A549 (cell line): ENCODE measurements at regions of chr22 and their contacts with region 1.

Region 1: DNA sequence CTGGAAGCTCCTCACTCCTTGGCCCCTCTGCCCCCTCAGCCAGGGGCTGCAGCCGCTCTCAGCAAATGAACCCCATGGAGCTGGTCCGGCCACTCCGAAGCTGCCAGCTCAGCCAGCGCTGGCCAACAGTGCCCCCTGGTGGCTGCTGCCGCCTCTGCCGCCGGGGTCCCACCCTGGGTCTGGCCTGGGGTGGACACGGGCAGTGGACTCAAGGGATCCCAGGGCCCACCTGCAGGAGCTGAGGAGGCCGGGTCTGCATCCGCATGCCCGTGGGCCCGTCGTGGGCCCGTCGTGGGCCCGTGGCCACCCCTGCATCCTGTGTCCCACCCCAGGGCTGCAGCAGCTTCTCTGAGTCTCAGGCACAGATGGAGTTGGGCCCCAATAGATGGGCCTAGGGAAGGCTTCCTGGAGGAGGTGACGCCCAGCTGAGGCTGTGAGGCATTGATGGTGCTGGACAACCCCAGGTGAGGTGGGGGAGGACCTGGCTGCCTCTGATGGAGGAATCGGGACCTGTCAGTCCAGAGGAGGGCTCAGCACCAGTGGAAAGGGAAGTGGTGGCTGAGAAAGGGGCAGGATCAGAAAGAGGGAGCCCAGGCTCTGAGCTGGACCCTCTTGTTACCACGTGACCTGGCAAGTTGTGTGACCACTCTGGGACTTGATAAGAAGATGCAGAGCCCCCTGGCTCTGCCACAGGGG is 522.3 kb downstream of the BRD1 start:
- DNase-seq: peak; percentile 31 to 49
- ATAC-seq: peak; percentile 93 to 98
- H3K4me3 ChIP-seq: no peak overlapping the region
- H3K27ac ChIP-seq: peak overlapping the region; percentile 38 to 60; a peak in 1 of 6 replicates
- H3K4me1 ChIP-seq: no peaks in the 10 kb centered on the region
- CTCF ChIP-seq: peak; percentile 70
- EP300 ChIP-seq: no peak
- POLR2A ChIP-seq: no peak
- RAD21 ChIP-seq: peak; percentile 89 to 90

Region 2: DNA sequence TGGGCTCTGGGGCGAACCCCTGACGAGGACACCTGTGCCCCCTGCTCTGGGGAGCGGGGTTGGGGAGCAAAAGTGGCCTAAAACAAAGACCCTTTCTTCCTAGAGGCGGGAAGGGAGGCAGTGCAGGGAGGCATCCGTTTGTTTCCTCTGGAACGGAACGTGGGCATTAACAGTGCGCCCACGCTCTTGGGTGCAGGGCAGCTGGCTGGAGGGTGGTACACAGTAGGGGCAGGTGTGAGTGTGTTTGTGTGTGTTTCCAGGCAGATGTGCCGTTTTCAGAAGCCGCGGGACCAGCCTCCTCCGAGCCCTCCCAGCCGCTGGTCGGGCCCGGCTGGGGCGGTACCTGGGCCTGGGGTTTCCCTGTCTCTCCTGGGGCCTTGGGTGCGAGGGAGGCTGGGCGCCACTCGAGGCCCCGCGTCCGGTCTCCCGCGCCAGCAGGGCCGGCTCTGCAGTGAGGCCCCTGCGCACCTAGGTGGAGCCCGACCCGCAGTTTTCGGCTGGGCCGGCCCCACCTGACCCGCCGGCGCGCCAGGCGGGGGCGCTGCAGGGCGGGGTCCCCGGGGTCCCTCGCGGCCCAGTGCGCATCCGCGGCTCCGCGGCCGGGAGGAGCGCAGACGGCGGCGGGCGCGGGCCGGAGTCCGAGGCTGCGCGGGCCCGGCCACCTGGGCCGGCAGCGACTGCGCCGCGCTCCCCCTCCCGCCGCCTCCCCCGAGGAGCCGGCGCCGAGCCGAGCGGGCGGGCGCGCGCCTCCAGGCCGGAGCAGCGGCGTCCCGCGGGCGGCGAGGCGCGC is 730.4 kb before region 1 on chr22:
- CTCF ChIA-PET with region 1: interaction called, 20 read pairs
- POLR2A ChIA-PET with region 1: no interaction called
- DNase-seq: peak; percentile 67 to 79
- ATAC-seq: peak; percentile 83 to 94
- H3K4me3 ChIP-seq: peak overlapping the region; percentile 52
- H3K27ac ChIP-seq: peak overlapping the region; percentile 64 to 91; a peak in 5 of 6 replicates
- H3K4me1 ChIP-seq: 0 out of 3 replicates have a peak, but pooled peaks cover 4% of the 10 kb centered on the region
- CTCF ChIP-seq: peak; percentile 81
- EP300 ChIP-seq: no peak
- POLR2A ChIP-seq: peak; percentile 32; the same call in 1 of the 2 replicates
- RAD21 ChIP-seq: peak; percentile 46 to 67

Region 3: GRCh38 chr22:48943567-48944432 is 361.6 kb before region 1 on chr22:
- CTCF ChIA-PET with region 1: interaction called, 13 read pairs
- POLR2A ChIA-PET with region 1: no interaction called
- DNase-seq: peak; percentile 20 to 25
- ATAC-seq: peak; percentile 84 to 97
- H3K4me3 ChIP-seq: no peak overlapping the region
- H3K27ac ChIP-seq: no peak overlapping the region
- H3K4me1 ChIP-seq: no peaks in the 10 kb centered on the region
- CTCF ChIP-seq: peak; percentile 34; the same call in 2 of the 3 replicates
- EP300 ChIP-seq: no peak
- POLR2A ChIP-seq: no peak
- RAD21 ChIP-seq: peak; percentile 25 to 26; a peak in 2 of 5 replicates

Region 4: DNA sequence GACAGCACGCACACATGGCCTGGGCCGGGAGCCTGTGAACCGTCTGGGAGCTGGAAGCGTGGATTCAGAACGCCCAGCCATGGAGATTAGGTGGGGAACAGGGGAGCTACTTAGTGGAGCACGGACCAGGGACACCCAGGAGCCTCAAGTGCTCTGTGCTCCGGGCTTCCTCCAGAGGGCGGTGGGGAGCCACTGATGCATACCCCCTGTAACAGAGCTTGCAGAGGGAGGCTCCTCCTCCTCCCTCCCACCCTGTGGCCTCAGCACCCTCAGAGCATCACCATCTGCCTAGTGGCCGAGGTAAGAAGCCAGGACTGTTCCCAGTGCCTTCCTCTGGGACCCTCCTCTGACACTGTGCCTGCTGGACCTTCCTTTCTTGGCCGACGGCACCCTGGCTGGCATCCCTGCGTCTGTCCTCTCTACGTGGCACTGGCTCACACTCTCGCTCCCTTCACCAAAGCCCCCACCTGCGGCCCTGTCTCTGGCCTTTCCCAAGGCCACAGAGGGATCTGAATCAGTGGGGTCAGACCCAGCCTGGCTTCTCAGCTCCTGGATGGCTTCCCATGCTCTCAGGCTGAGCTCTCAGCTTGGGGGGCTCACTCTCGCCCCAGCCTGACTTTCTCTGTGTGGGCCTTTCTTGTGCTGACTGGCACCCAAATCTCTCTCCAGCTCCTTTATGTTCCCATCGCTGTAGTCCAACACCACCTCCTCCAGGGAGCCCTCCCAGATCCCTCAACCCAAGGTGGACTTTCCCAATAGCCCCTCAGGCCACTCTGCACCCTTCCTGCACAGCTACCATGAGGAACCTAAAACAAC is 258.6 kb before region 1 on chr22:
- CTCF ChIA-PET with region 1: interaction called, 98 read pairs
- POLR2A ChIA-PET with region 1: no interaction called
- DNase-seq: peak; percentile 50 to 60
- ATAC-seq: peak; percentile 86 to 99
- H3K4me3 ChIP-seq: no peak overlapping the region
- H3K27ac ChIP-seq: no peak overlapping the region
- H3K4me1 ChIP-seq: no peaks in the 10 kb centered on the region
- CTCF ChIP-seq: peak; percentile 42
- EP300 ChIP-seq: no peak
- POLR2A ChIP-seq: no peak
- RAD21 ChIP-seq: peak; percentile 62 to 76

Region 5: DNA sequence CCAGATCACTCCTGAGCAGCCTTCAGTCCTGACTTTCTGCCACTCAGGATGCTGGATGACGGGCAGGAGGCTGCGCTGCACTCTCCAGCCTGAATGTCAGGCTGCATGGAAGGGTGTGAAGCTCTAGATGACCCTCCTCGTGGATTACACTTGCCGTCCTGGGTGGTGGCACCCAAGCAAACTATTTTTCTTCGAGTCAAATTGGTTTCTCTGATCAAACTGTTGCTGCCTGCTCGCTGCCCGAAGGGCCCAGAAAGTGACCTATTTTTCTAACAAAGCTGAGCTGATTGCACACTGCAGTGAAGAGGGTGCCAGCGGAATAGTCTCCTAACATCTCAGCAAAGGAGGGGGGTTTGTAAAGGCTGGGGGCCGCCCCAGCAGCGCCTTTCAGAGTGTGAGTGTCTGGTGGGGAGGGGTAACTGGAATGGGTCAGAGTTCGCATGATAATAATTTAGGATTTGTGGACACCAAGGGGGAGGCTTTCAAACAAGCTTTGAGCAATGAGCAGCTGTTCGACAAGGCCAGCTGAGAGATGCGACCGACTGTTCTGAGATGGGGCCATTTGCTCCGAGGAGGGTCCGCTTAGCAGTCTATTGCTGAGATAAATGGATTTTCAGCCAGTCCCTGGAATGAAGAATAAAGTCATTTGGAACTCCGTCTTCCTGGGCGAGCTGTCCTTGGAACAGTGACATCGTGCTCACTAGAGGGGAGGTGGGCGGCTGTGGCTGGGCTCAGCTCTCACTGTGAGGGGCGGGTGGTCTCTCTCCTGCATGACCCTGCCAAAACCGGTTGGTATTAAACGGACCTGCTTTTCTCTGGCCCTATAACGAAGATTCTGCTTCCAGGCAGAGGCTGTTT is 15.3 kb before region 1 on chr22:
- CTCF ChIA-PET with region 1: interaction called, 22 read pairs
- POLR2A ChIA-PET with region 1: no interaction called
- DNase-seq: no peak
- ATAC-seq: no peak
- H3K4me3 ChIP-seq: no peak overlapping the region
- H3K27ac ChIP-seq: no peak overlapping the region
- H3K4me1 ChIP-seq: no peaks in the 10 kb centered on the region
- CTCF ChIP-seq: no peak
- EP300 ChIP-seq: no peak
- POLR2A ChIP-seq: no peak
- RAD21 ChIP-seq: no peak

Region 6: GRCh38 chr22:49350441-49351121 is 45.2 kb after region 1 on chr22:
- CTCF ChIA-PET with region 1: no interaction called
- POLR2A ChIA-PET with region 1: no interaction called
- DNase-seq: no peak
- ATAC-seq: peak in 1 of 2 experiments; percentile 47; a peak in 1 of 6 replicates
- H3K4me3 ChIP-seq: no peak overlapping the region
- H3K27ac ChIP-seq: no peak overlapping the region
- H3K4me1 ChIP-seq: no peaks in the 10 kb centered on the region
- CTCF ChIP-seq: no peak
- EP300 ChIP-seq: no peak
- POLR2A ChIP-seq: no peak
- RAD21 ChIP-seq: no peak